Posterior cingulate gyrus (tissue), 11 donors: ENCODE measurements at regions of chr1 and their contacts with region 1.

Region 1: GRCh38 chr1:23273450-23274133 is 56.3 kb upstream of the HTR1D start:
- DNase-seq: no peak

Region 2: DNA sequence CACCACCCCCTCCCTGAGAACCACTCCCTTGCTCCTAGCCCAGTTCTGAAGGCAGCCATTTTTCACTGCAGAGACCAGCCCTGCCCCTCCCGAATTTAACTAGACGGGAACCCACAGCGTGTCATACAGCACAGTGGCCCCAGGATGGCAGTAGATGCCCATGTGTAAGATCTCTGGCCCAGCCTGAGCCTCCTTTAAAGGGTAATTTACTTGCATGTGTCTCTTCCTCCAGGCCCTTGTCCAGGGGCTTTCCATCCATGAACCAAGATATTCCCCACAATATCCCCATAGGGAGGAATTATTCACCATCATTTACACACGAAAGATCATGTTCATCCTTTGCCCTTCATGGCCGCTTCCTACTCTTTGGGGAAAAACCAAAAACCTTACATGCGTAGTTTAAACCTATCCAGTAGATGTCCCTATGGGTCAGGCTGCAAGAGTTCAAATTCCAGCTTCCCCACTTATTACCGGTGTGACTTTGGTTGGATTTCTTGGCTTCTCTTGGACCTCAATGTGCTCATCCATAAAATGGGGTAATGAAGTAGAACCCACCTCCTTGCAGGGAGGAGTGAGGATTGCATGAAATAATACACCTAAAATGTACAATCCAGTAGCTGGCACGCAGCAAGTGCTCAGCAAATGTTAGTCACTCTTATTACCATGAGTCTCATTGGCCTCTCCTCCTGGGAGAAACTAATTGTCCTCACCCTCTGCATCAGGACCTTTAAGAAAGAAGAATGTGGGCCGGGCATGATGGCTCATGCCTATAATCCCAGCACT is 296.9 kb before region 1 on chr1:
- intact Hi-C with region 1: loop called (anchors 10 kb)
- DNase-seq: peak; percentile 31 to 95 (median 69)

Region 3: DNA sequence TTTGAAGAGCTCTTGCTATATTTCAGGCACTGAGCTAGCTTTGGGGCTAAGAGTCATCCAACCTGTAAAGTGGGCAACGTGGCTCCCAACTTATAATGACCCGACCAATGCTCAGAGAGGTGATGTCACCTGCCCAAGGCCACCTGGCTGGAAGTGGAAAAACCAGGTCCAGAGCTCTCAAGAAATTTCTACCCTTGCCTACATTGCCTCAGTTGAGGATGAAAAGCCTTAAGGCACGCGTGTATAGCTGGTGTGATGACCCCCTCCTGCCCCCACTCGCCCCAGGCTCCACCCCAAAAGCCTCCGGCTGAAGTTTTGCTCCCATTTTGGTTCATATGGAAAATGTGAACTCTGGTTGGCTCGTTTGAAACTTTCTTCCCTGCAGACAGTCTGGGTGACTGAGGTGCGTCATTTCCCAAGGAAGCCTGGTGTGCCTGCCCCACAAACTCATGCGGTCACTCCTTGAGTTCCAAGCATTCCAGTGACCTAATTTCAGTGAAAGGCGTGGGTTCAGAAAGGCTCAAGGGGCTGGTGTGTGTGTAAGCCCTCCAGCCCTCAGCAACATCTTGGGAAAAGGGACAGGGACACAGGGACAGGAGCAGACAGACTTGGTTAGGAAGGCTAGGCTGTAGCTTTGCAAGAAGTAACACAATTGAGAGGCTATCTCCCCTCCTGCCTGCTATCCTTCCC is 76.8 kb before region 1 on chr1:
- intact Hi-C with region 1: loop called (anchors 10 kb)
- DNase-seq: no peak

Region 4: GRCh38 chr1:23322770-23323169 is 49.2 kb after region 1 on chr1:
- intact Hi-C with region 1: no loop called
- DNase-seq: no peak